ENCODE measurements at regions of chr2 and their contacts with region 1.

Region 1: DNA sequence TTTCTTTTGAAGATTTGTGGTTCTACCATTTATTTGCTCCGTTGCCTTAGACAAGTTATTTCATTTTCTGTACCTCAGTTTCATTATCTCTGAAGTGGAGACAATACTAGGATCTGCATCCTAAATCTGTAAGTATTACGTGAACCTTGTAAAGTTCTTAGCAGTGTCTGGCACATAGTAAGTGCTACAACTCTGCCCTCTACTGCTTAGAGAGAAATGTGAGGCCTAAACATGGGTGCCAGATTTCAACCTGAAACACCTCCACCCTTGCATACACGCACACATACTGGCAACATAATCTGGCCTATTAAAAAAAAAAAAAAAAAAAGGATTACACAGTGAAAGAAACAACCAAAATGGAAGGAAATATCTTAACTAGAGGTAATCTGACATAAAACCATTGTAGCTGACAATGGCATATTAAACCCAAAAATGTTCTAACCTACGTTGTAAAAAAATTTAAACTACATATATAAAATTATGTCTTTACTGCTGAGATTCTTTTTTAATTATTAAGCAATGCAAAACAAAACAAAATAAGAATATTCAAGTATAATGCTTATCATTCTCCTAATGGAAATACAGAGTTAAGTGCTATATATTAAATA is 132.6 kb downstream of the MAP2 start:
- DNase-seq: no peak
- H3K4me3 ChIP-seq: no peak overlapping the region
- CTCF ChIP-seq: peak; percentile 66

Region 2: DNA sequence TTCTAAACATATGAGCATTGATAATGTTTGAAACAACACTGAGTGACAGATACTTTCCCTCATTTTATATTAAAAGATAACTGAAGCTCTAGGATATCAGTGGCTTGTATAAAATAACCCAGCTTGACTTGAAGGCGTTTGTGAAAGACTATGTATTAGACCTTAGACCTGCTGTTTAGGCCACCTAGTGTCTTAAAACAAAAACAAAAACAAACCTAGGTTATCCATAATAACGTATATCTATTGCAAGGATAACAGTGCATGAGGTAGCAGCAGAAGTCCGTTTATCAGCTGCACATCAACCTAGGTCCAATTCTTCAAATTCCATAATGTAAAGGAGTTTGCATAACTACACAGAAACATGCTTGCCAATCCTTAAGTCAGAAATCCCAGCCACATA is 212.1 kb before region 1 on chr2:
- CTCF ChIA-PET with region 1: interaction called, 10 read pairs
- POLR2A ChIA-PET with region 1: no interaction called
- DNase-seq: no peak
- H3K4me3 ChIP-seq: no peak overlapping the region
- CTCF ChIP-seq: no peak

Region 3: GRCh38 chr2:209431701-209432100 is 124.8 kb before region 1 on chr2:
- CTCF ChIA-PET with region 1: interaction called, 15 read pairs
- POLR2A ChIA-PET with region 1: no interaction called
- DNase-seq: peak; percentile 40
- H3K4me3 ChIP-seq: no peak overlapping the region
- CTCF ChIP-seq: no peak

Measured in AG04449 (cell line).